Posterior cingulate gyrus (tissue), 11 donors: ENCODE measurements at regions of chr15 and their contacts with region 1.

Region 1: GRCh38 chr15:56918046-56918938 is at the start of gene TCF12:
- DNase-seq: peak; percentile 85 to 98 (median 89)

Region 2: DNA sequence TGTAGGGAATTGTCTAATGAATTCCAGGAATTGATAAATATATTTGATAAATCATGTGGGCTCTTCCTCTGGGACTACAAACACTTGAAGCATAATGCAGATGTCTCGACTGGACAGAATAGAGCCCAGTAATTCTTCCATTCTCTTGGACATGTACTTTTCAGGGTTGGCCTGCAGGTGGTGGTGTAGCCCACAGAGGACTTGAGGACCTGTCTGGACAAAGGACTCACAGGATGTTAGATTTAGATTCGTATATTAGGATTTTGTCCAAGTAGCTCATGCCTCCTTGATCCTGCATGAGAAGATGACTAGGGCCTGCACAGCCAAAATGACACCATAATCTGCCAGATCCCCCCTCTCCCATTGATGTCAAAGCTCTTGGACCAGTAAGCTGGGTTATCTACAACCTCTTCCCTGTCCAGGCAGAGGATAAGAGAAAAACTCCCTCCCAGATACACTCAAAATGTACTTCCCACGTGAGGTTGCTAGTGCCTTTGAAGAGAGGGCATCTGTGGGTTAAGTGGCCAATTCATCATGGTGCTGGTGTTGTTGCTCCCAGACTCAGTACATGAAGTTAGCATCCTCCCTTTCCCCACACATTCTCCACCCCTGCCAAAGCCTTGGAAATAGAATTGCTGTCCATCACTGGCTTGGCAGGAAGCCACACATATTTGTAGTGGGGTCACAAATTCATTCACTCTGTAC is 96.4 kb before region 1 on chr15:
- intact Hi-C with region 1: loop called (anchors 10 kb)
- DNase-seq: peak in 8 of 10 donors; percentile 25 to 93 (median 62)

Region 3: DNA sequence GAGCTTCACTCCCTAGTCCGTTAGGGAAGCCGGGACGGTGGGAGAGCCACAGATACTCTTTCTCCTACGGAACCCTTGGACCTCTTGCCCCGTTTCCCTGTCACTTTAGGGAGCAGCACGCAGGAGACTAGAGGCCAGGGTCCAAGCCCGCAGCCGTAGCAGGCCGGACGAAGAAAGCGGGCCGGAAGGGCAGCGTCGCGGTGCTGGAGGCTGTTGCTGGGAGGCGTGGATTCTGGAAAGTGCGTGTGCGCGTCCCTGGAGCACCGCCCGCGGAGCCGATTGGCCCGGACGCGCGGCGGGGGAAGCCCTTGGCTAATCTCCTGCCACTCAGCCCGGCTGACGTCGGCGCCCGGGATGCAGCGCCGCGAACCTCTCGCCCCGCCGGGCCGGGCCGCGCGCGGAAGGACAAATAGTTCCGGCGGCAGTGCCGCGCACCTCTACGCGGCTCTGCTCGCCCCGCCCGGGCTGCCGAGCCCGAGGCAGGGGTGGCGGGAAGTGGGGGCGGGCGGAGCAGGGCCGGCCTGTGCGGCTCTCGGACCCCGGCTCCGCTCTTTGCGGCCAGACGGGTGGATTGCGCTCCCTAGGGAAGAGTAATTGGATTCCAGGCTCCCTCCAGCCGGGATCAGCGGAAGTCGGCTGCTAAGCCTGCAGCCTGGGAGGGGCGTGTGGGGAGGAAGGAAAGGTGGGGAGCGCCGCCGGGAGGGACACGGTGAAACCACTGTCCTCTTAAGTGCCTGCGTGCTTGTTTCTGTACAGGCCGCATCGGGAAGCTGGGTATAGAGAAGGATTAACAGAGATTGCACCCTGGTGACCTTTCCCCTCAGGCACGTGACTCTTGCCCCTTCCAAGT is 31.1 kb before region 1 on chr15:
- intact Hi-C with region 1: loop called (anchors 1 kb)
- DNase-seq: peak; percentile 86 to 99 (median 93)

Region 4: DNA sequence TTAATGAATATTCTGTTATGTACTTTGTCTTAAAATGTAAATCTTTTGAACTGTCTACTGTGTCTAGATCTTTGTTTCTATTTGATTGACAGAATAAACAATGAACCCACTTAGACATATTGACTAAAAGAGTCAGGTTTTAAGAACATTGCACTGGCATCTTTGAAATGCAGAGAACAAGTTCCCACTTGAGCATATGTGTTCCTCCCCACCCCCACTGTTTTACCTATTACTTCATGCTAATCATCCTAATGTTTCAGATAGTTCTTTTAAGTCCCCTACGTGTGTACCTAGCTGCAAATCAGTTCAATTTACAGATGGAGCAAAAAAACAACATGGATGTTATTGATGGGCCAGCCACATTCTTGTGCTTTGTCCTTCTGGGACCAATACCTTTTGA is 11.5 kb before region 1 on chr15:
- intact Hi-C with region 1: no loop called
- DNase-seq: no peak

Region 5: DNA sequence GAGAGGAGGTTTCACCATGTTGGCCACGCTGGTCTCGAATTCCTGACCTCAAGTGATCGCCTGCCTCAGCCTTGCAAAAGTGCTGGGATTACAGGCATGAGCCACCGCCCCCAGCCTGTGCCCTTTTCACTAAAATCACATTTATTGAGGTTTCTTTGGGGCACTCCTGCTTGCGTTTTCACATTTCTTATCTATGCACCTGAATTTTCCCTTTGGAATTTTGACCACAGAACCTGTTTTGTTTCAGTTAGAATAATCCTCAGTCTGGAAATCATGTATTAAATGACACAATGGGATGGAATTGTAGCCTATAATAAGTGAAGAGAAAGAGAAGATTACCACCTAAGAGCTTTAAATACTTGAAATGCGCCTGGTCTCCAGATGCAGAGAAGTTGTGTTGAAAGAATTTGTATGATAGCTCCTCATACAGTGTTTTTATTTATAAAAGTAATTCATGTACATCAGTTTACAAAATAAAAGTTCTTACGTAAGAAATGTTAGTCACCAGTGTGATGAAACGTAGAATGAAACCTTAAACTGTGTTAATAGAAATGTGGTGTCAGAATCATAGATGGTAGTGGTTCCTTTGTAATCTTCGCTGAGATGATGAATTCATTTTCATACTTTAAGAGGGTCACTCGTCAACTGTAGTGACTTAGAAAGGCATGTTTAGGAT is 107.1 kb after region 1 on chr15:
- intact Hi-C with region 1: loop called (anchors 10 kb)
- DNase-seq: peak in 1 of 10 donors; percentile 29

Region 6: GRCh38 chr15:57213862-57214261 is 295.6 kb after region 1 on chr15:
- intact Hi-C with region 1: loop called (anchors 10 kb)
- DNase-seq: no peak

Region 7: GRCh38 chr15:57306161-57306943 is 388.1 kb after region 1 on chr15:
- intact Hi-C with region 1: loop called (anchors 10 kb)
- DNase-seq: peak; percentile 54 to 97 (median 86)